Prostate gland (tissue), 2 donors: ENCODE measurements at regions of chr4 and their contacts with region 1.

Region 1: GRCh38 chr4:177047070-177047850 is 254.5 kb upstream of the VEGFC start:
- DNase-seq: peak; percentile 18
- H3K4me3 ChIP-seq: no peak overlapping the region
- H3K27ac ChIP-seq: no peak overlapping the region
- H3K4me1 ChIP-seq: no peaks in the 10 kb centered on the region
- H3K27me3 ChIP-seq: no peaks in the 10 kb centered on the region
- CTCF ChIP-seq: peak; percentile 58 to 72 (median 68)
- POLR2A ChIP-seq: no peak

Region 2: DNA sequence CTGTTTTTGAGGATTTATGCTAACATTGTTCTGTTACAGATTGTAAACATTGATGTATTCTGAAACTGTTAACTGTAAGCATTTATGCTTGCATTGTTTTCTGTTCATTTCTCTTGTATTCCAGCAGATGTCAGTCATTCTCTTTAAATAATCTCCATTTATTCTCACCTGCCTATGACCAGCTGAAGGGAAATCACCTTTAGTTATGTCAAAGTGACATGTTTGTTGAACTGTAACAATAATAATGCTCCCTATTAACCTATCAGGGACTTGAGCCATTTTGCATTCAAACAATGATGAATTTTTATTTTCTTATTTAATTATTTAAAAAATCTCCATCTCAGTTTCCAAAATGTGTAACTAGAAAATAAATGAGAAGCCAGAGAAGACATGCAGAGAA is 669.5 kb before region 1 on chr4:
- intact Hi-C with region 1: loop called (anchors 5 kb)
- DNase-seq: no peak
- H3K4me3 ChIP-seq: no peak overlapping the region
- H3K27ac ChIP-seq: no peak overlapping the region
- H3K4me1 ChIP-seq: no peaks in the 10 kb centered on the region
- H3K27me3 ChIP-seq: no peaks in the 10 kb centered on the region
- CTCF ChIP-seq: peak in 3 of 4 experiments; percentile 15 to 62 (median 48)
- POLR2A ChIP-seq: no peak

Region 3: GRCh38 chr4:176563591-176563990 is 483.7 kb before region 1 on chr4:
- intact Hi-C with region 1: loop called (anchors 10 kb)
- DNase-seq: no peak
- H3K4me3 ChIP-seq: no peak overlapping the region
- H3K27ac ChIP-seq: no peak overlapping the region
- H3K4me1 ChIP-seq: no peaks in the 10 kb centered on the region
- H3K27me3 ChIP-seq: no peaks in the 10 kb centered on the region
- CTCF ChIP-seq: peak in 1 of 4 experiments; percentile 6
- POLR2A ChIP-seq: no peak

Region 4: DNA sequence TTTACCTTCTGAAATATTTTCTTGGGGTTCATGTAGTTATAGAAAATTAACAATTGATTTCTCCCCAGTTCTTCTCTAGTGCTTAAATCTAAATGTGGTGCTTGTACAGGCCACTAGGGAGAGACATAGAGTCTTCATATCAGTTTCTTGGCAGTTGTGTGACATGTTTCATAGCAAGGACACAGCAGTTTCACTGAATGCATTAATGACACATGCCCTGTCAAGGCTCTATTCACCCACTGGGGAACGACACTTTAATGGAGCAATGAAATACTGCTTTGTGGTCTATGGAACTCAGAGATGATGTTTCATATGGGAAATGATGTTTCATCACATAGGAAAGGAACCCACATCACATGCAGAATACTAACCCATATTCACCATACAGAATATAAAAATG is 257.3 kb before region 1 on chr4:
- intact Hi-C with region 1: loop called (anchors 10 kb)
- DNase-seq: peak; percentile 26
- H3K4me3 ChIP-seq: no peak overlapping the region
- H3K27ac ChIP-seq: no peak overlapping the region
- H3K4me1 ChIP-seq: no peaks in the 10 kb centered on the region
- H3K27me3 ChIP-seq: no peaks in the 10 kb centered on the region
- CTCF ChIP-seq: peak in 3 of 4 experiments; percentile 30 to 60 (median 57)
- POLR2A ChIP-seq: no peak

Region 5: DNA sequence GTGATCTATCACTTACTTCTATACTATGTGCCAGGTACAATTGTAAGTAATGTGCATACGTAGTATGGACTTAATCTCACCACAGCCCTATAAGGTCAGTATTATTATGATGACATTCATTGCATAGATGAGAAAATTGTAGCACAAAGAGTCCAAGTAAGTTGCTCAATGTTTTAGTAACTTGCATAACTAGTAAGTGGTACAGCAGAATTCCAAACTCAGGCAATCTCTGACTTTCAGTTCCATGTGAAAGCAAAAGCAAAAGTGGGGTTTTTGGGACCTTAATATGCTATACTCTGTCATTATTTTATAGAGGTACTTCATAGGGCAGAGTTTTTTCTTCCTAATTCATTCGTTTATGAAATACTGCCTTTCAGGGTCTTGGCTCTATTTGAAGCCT is 65.7 kb before region 1 on chr4:
- intact Hi-C with region 1: no loop called
- DNase-seq: no peak
- H3K4me3 ChIP-seq: no peak overlapping the region
- H3K27ac ChIP-seq: no peak overlapping the region
- H3K4me1 ChIP-seq: no peaks in the 10 kb centered on the region
- H3K27me3 ChIP-seq: no peaks in the 10 kb centered on the region
- CTCF ChIP-seq: no peak
- POLR2A ChIP-seq: no peak

Region 6: DNA sequence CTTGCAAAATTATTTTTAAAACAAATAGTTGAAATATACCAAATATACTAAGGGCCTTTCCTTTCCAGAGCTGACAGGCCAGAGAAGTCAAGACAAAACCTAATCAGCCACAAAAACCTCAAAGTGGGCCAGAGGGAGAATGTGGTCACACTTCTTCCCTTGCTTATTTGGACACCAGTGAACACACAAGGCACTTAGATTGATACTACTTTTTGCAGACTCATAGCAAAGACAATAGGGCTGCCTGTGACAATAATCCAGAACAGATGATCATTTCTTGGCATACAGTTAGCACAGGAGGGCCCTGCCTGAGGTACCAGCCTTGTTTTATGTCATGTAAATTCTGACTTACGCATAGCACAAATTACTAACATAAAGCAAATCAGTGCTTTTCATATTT is 46.7 kb after region 1 on chr4:
- intact Hi-C with region 1: no loop called
- DNase-seq: no peak
- H3K4me3 ChIP-seq: no peak overlapping the region
- H3K27ac ChIP-seq: no peak overlapping the region
- H3K4me1 ChIP-seq: no peaks in the 10 kb centered on the region
- H3K27me3 ChIP-seq: no peaks in the 10 kb centered on the region
- CTCF ChIP-seq: no peak
- POLR2A ChIP-seq: no peak

Region 7: DNA sequence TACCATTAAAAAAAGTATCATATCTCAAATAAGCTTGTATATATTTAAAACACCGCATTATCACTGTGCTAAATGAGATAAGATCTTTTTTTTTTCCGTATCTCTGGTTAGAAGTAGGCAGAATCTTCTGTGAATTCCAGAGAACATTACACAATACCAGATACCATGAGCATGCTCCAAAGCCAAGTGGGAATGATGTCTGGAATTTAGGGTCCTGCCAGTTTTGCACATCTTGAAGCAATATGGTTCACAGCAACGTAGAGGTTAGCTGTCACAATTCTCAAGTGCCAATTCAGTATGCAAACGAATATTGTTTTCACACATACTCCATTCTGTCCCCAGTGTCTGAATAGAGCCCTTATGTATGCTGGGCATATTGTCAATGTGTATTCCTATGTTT is 134.9 kb after region 1 on chr4:
- intact Hi-C with region 1: no loop called
- DNase-seq: no peak
- H3K4me3 ChIP-seq: no peak overlapping the region
- H3K27ac ChIP-seq: no peak overlapping the region
- H3K4me1 ChIP-seq: no peaks in the 10 kb centered on the region
- H3K27me3 ChIP-seq: no peaks in the 10 kb centered on the region
- CTCF ChIP-seq: no peak
- POLR2A ChIP-seq: no peak